ENCODE measurements at regions of chr14 and their contacts with region 1.

Region 1: GRCh38 chr14:103518422-103519042 is 4.1 kb downstream of the CKB start:
- DNase-seq: peak; percentile 89

Region 2: DNA sequence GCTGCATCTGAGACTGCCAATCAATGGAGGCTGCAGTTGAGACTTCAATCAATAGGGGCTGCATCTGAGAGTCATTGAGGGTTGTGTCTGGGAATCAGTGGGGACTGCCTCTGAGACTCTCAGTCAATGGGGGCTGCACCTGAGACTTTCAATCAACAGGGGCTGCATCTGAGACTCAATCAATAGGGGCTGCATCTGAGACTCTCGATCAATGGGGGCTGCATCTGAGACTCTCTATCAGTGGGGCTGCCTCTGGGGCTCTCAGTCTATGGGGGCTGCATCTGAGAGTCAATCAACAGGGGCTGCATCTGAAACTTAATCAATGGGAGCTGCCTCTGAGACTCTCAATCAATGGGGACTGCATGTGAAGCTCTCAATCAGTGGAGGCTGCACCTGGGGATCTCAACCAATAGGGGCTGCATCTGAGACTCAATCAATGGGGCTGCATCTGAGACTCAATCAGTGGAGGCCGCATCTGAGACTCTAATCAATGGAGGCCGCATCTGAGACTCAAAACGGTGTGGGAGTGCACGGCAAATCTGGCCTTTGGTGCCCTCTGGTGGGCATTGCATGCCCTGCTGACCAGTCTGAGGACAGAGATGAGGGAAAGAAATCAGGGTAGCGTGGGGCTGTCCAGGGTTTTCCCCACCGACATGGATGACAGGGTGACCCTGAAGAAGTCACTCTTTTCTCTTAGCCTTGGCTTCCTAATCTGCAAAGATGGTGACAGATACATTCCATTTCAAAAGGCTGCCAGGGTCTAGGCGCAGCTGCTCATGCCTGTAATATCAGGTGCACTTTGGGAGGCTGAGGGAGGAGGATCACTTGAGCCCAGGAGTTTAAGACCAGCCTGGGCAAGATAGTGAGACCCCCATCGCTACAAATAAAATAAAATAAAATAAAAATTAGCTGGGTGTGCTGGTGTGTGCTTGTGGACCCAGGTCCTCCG is 225.8 kb before region 1 on chr14:
- intact Hi-C with region 1: no loop called
- DNase-seq: peak; percentile 93

Region 3: DNA sequence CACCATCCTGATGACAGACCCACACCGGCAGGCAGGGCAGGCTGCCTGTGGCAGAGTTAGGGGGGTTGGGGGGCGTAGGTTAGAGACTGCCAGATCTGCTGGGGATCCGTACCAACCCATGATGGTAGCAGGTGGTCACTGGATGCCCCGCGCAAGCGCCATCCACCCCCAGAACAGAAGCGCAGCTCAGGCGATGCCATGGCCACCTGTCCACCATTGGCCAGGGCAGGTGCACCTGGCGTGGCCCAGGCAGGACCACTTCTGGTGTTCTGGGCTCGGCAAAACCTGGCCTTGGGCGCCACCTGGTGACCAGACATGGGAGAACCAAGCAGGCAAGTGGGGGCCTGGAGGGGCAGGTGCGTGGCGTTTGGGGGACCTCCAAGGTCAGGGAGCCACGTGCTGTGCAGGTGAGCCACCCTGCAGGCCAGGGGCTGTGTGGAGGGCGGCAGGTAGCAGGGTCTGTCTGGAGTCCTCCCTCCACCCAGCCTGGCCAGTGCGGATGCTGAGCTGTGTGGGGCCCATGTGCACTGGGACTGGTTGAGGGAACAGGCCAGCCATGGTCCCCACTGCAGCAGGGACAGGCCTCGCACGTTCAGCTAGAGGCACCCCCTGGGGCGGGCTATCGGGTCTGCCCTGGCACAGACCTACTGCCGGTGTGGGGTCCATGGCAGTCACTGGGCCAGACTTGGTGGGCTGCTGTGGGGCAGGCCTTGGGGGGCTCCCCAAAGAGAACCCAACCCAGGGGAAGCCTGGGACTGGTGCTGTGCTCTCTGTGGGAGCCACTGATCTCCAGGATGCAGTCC is 28.3 kb after region 1 on chr14:
- intact Hi-C with region 1: loop called (anchors 2 to 5 kb)
- DNase-seq: peak; percentile 91

Region 4: DNA sequence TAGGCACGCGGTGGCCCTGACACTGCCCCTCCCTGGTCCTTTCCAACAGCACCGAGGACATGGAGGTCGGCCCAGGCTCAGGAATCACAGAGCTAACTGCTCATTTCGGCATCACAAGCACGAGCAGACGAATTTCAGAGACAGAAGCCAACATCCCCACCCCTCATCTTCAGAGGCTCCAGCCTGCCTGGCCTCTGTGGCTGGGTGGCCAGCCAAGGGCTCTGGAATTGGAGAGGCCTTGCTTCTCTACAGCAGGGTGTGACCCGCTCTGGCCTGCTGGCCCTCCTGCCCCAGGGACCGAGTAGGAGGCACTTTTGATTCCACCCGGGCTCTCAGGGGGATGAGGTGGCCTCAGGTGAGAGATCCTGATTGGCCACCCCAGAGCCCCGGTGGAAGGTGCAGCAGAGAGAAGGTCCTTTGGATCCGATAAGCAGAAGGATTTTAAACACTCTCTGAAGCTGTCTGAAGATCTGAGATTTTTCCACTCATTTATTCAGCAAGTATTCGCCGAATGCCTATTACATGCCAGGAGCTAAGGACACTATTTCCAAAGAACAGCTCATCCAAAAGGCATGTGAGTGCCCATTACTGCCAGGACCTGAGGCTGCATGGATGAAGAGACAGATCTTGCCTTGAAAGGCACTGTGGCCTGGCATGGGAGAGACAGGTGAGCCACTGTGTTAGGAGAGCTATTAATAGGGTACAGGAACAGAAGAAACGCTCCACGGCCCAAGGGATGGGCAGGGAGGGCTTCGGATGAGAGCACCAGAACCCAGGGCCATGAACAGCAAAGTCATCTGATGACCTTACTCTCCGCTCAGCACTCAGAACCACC is 33.7 kb after region 1 on chr14:
- intact Hi-C with region 1: loop called (anchors 2 to 5 kb)
- DNase-seq: peak; percentile 88

Measured in posterior vena cava (tissue), 2 donors.